AG04449 (cell line): ENCODE measurements at regions of chr5 and their contacts with region 1.

Region 1: GRCh38 chr5:176447982-176448608 is at the start of gene FAF2:
- DNase-seq: peak; percentile 98
- H3K4me3 ChIP-seq: peak within 1 kb of the TSS; percentile 100
- CTCF ChIP-seq: peak; percentile 93

Region 2: DNA sequence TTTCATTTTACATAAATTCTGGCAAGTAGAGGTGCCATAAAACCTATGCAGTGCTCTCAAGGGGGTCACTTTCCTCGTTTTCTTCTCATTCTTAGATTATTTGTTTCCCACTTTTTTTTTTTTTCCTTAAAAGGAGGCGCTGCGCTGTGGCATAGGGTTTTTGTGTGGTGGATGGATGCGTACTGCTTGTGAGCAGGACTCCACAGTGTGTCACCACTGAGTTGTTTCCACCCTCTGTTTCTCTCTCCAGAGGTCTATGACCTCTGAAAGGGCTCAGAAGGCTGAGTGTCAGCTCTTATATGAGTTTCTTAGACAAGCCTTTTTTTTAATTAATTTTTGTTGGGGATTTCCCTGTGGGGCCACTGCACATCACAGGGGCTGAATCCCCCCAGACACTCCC is 18.1 kb before region 1 on chr5:
- CTCF ChIA-PET with region 1: interaction called, 33 read pairs
- POLR2A ChIA-PET with region 1: no interaction called
- DNase-seq: no peak
- H3K4me3 ChIP-seq: no peak overlapping the region
- CTCF ChIP-seq: no peak

Region 3: GRCh38 chr5:176474510-176474909 is 26.4 kb after region 1 on chr5:
- CTCF ChIA-PET with region 1: interaction called, 19 read pairs
- POLR2A ChIA-PET with region 1: no interaction called
- DNase-seq: peak; percentile 29
- H3K4me3 ChIP-seq: no peak overlapping the region
- CTCF ChIP-seq: no peak

Region 4: DNA sequence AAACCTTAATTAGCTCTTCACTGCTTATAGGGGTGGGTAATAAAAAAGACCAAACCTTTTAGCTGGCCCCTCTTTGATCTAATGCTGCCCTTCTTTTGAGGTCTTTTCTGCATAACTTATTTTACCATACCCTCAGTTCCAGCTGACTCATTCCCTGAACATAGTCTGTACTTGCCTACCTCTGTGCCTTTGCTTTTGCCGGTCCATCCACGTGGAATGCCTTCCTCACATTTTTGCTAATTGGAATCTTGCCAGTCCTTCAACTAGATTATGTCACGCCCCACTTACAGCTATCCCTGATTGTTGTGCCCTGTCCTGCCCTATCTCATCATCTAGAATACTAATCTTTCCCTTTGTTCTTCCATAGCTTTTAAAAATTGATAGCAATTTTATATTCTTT is 44.3 kb after region 1 on chr5:
- CTCF ChIA-PET with region 1: interaction called, 15 read pairs
- POLR2A ChIA-PET with region 1: no interaction called
- DNase-seq: no peak
- H3K4me3 ChIP-seq: no peak overlapping the region
- CTCF ChIP-seq: no peak

Region 5: GRCh38 chr5:176514244-176514950 is 66.3 kb after region 1 on chr5:
- CTCF ChIA-PET with region 1: interaction called, 10 read pairs
- POLR2A ChIA-PET with region 1: no interaction called
- DNase-seq: no peak
- H3K4me3 ChIP-seq: no peak overlapping the region
- CTCF ChIP-seq: no peak

Region 6: DNA sequence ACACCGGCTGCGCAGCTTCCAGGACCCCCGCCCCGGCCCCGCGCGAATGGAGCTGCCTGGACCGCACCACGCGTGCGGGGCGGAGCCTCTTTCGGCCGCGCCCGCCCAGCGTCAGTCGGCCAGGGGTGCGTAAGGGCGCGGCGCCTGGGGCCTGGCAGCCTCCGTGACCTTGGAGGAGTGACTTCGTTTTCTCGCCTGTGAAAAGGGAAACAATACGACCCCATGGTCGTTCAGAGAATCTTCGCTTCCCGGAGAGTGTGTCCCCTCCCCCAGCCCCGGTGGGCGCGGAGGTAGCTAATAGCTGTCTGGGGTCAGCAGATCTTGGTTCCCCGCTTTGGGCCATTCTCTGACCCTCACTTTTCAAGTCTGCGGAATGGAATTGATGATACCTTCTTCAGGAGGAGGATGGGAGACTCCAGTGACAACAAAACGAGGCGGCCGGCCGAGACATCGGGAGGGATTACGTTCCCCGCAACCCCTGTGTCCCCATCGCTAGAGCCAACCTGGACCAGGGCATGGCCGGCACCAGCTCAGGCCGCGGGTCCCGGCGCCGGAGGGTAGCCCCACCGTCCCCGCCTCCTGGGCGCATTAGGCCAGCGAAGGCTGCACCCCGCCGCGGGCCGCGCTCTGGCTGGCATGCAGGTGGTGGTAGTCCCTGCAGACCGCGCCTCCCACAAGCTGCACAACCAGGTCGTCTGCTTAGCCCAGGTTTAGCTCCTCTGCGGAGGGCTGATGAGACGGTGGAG is 95.5 kb after region 1 on chr5:
- CTCF ChIA-PET with region 1: interaction called, 28 read pairs
- POLR2A ChIA-PET with region 1: interaction called, 3 read pairs
- DNase-seq: no peak
- H3K4me3 ChIP-seq: peak overlapping the region; percentile 59
- CTCF ChIP-seq: no peak